Activated CD8-positive, alpha-beta memory T cell treated with anti-CD3 and anti-CD28 coated beads, Interleukin-2, amount 10 ng/mL, durations not matched to agents 7 days and 5 days (primary cell): ENCODE measurements at regions of chr7 and their contacts with region 1.

Region 1: GRCh38 chr7:100158229-100159098 is at the start of gene TRAPPC14:
- DNase-seq: peak; percentile 94
- ATAC-seq: peak; percentile 94
- H3K4me3 Mint-ChIP-seq: peak within 1 kb of the TSS; percentile 75
- H3K27ac Mint-ChIP-seq: peak within 1 kb of the TSS; percentile 78
- H3K4me1 Mint-ChIP-seq: peaks cover 48% of the 10 kb centered on the region
- H3K27me3 Mint-ChIP-seq: no peaks in the 10 kb centered on the region
- total RNA-seq, gene TRAPPC14: 36.8 to 43.5 TPM

Region 2: DNA sequence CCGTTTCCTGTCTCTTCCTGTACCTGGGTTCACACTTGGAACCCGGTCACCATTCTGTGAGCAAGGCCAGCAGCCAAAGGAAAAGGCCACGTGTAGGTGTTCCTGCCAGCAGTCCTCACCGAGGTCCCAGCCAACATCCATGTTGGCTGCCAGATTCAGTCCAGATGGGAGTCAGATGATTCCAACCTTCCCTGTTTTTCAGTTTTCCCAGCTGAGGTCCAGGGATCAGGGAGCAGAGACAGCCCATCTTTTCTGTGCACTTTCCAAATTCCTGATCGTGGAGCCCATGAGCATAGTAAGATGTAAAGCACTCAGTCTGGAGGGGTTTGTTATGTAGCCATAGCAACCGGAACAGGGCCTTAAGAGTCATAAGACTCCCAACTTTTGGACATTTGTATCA is 57.4 kb after region 1 on chr7:
- CTCF ChIA-PET with region 1: interaction called, 19 read pairs
- DNase-seq: no peak
- ATAC-seq: no peak
- H3K4me3 Mint-ChIP-seq: no peak overlapping the region
- H3K27ac Mint-ChIP-seq: peak overlapping the region; percentile 28
- H3K4me1 Mint-ChIP-seq: peaks cover 51% of the 10 kb centered on the region
- H3K27me3 Mint-ChIP-seq: no peaks in the 10 kb centered on the region